Activated CD4-positive, alpha-beta memory T cell treated with anti-CD3 and anti-CD28 coated beads for 36 hours (primary cell): ENCODE measurements at regions of chr18 and their contacts with region 1.

Region 1: DNA sequence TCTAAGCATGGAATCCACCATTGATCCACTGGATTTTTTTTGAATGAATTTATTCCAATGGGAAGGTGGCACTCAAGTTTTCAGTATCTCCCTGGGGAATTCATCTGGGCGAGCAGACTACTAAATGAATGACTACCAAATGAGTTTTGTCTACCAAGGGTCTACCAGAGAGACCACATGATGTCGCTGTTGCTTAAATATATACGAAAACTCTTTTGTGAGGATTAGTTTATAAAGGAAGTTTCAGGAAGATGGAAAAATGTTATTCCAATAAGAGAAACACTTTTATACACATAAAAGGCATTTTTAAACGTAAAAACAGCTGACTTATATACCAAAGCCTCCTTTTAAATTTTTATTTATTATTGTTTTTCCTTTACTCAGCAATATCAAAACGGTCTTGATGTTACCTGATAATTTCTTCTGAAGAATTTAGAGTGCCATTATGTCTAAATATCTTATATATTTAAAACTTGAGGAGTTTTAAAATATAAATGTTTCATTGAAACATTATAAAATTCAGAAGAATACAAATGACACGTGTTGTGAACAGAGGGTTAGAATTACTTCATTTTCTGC is 139.7 kb downstream of the HRH4 start:
- DNase-seq: no peak
- H3K4me3 Mint-ChIP-seq: no peak overlapping the region
- H3K27ac Mint-ChIP-seq: no peak overlapping the region
- H3K4me1 Mint-ChIP-seq: no peaks in the 10 kb centered on the region
- H3K27me3 Mint-ChIP-seq: peaks cover 4% of the 10 kb centered on the region

Region 2: DNA sequence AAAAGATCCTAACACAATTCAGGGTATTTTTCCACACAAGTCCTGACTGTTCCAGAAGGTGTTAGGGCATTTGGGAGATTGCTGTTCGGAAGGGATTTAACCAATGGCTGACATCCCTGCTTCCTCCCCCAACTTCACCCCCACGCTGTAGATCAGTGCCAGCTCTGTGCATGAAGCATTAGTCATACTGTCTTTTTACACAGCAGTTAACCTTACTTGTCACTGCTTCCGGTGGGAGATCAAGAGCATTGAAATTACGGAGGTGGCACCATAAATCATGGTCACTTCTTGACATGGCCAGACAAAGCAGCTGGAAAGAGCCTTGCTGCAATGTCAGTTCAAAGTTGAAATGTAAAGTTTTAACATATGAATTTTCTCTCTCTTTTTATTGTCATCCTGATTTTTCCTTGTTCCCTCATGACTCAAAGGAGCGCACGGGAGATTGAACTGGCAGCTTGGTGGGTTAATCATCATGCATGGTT is 69.5 kb before region 1 on chr18:
- CTCF ChIA-PET with region 1: interaction called, 3 read pairs
- POLR2A ChIA-PET with region 1: no interaction called
- intact Hi-C with region 1: loop called (anchors 10 kb)
- DNase-seq: peak; percentile 10
- H3K4me3 Mint-ChIP-seq: no peak overlapping the region
- H3K27ac Mint-ChIP-seq: no peak overlapping the region
- H3K4me1 Mint-ChIP-seq: peaks cover 2% of the 10 kb centered on the region
- H3K27me3 Mint-ChIP-seq: peaks cover 39% of the 10 kb centered on the region

Region 3: GRCh38 chr18:24672165-24672941 is 72.2 kb after region 1 on chr18:
- CTCF ChIA-PET with region 1: no interaction called
- POLR2A ChIA-PET with region 1: no interaction called
- intact Hi-C with region 1: loop called (anchors 10 kb)
- DNase-seq: no peak
- H3K4me3 Mint-ChIP-seq: no peak overlapping the region
- H3K27ac Mint-ChIP-seq: no peak overlapping the region
- H3K4me1 Mint-ChIP-seq: no peaks in the 10 kb centered on the region
- H3K27me3 Mint-ChIP-seq: peaks cover 8% of the 10 kb centered on the region

Region 4: GRCh38 chr18:24726727-24727492 is 126.7 kb after region 1 on chr18:
- CTCF ChIA-PET with region 1: interaction called, 27 read pairs
- POLR2A ChIA-PET with region 1: no interaction called
- intact Hi-C with region 1: loop called (anchors 1 kb)
- DNase-seq: peak; percentile 63
- H3K4me3 Mint-ChIP-seq: no peak overlapping the region
- H3K27ac Mint-ChIP-seq: no peak overlapping the region
- H3K4me1 Mint-ChIP-seq: no peaks in the 10 kb centered on the region
- H3K27me3 Mint-ChIP-seq: no peaks in the 10 kb centered on the region

Region 5: DNA sequence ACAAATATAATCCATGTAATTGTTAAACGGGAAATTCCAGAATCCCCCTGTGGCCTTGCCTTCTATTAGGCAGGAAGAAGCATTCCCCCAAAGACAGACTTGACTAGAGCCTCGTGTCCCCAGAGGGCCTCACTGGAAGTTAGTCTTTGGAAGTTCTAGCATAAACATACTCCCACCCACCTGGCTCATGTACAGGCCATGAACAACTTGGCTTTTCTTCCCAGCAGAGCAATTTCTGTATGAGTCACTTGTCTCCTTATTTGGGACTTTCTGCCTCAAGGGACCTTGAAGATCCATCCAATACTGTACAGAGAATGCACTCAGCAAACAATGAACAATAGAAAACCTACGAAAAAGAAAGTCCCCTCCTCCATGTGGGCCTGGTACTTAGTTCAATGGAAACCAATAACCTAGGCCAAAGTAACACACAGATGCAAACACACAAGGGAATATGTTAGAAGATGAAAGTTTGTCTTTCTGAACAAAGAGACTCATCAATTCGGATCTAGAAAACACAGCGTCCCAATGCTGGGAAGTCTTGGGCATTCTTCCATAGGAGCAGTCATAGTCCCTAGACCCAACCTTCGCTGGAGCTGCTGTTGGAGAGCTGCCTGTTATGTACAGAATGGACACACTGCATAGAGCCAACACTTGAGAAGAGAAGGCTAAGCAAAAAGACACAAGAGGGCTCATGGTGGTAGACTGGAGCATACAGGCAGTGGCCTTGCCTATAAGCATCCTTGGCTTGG is 163.8 kb after region 1 on chr18:
- CTCF ChIA-PET with region 1: no interaction called
- POLR2A ChIA-PET with region 1: no interaction called
- intact Hi-C with region 1: no loop called
- DNase-seq: no peak
- H3K4me3 Mint-ChIP-seq: no peak overlapping the region
- H3K27ac Mint-ChIP-seq: no peak overlapping the region
- H3K4me1 Mint-ChIP-seq: no peaks in the 10 kb centered on the region
- H3K27me3 Mint-ChIP-seq: peaks cover 2% of the 10 kb centered on the region